H1 (cell line): ENCODE measurements at regions of chr5 and their contacts with region 1.

Region 1: GRCh38 chr5:149035372-149035790 is 27.5 kb downstream of the SH3TC2 start:
- DNase-seq: peak; percentile 41 to 80
- H3K4me3 ChIP-seq: no peak overlapping the region
- H3K27ac ChIP-seq: no peak overlapping the region
- H3K4me1 ChIP-seq: no peaks in the 10 kb centered on the region
- H3K27me3 ChIP-seq: no peaks in the 10 kb centered on the region
- CTCF ChIP-seq: peak; percentile 92 to 94 (median 94)
- EP300 ChIP-seq: no peak
- POLR2A ChIP-seq: no peak
- RAD21 ChIP-seq: peak; percentile 96 to 97

Region 2: DNA sequence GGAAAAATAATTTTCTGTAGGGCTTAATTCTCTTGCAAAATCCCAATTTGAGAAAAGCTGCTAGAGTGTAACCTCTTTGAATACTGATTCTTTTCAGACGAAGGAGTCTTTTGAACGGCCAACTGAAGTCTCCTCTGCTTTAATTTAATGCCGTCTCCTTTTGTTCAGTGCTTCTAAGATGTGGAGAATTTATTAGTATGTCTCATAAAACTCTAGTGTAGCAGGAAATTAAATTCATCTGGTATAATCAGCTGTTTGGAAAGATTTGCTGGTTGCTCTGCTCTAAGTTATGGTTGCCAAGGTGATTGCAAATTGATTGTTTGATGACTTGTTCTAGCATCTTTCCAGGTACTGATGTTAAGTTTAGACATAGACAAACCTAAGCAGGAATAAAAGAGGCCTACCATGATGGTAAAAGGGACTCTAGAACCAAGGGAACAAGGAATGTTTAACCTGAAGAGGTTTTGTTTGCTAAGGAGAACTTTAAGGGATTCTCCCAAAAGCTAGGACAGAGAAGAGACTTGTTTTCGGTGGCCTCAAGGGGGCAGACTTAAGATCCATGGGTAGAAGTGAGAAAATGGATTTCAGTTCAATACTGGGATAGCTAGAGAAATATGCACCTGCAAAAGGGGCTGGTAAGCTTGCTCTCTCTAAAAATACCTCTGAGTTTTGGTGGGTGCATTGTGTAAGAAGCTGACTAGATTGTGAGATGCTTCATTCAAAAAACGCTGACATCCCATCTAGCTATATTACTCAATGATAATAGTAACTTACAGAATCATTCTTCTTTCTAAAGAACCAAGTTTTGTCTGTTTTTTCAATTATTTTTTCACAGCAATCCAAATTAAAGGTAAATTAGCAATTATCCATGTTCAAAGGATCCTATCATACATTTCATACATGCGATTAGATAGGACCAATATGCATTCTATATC is 214.7 kb before region 1 on chr5:
- CTCF ChIA-PET with region 1: interaction called, 16 read pairs
- POLR2A ChIA-PET with region 1: no interaction called
- DNase-seq: no peak
- H3K4me3 ChIP-seq: no peak overlapping the region
- H3K27ac ChIP-seq: no peak overlapping the region
- H3K4me1 ChIP-seq: peaks cover 0 to 1% (median 0%) of the 10 kb centered on the region in 4 experiments; a peak in 4 of 7 replicates
- H3K27me3 ChIP-seq: peaks cover 0 to 5% (median under 1%) of the 10 kb centered on the region in 4 experiments; a peak in 4 of 7 replicates
- CTCF ChIP-seq: peak in 2 of 3 experiments; percentile 46 to 68; a peak in 3 of 4 replicates
- EP300 ChIP-seq: no peak
- POLR2A ChIP-seq: no peak
- RAD21 ChIP-seq: peak; percentile 46 to 59; a peak in 3 of 4 replicates

Region 3: GRCh38 chr5:148963664-148964063 is 71.7 kb before region 1 on chr5:
- CTCF ChIA-PET with region 1: interaction called, 31 read pairs
- POLR2A ChIA-PET with region 1: no interaction called
- DNase-seq: peak in 1 of 2 experiments; percentile 0
- H3K4me3 ChIP-seq: no peak overlapping the region
- H3K27ac ChIP-seq: no peak overlapping the region
- H3K4me1 ChIP-seq: no peaks in the 10 kb centered on the region
- H3K27me3 ChIP-seq: no peaks in the 10 kb centered on the region
- CTCF ChIP-seq: no peak
- EP300 ChIP-seq: no peak
- POLR2A ChIP-seq: no peak
- RAD21 ChIP-seq: no peak

Region 4: GRCh38 chr5:149011074-149011476 is 24.3 kb before region 1 on chr5:
- CTCF ChIA-PET with region 1: interaction called, 27 read pairs
- POLR2A ChIA-PET with region 1: no interaction called
- DNase-seq: no peak
- H3K4me3 ChIP-seq: no peak overlapping the region
- H3K27ac ChIP-seq: no peak overlapping the region
- H3K4me1 ChIP-seq: no peaks in the 10 kb centered on the region
- H3K27me3 ChIP-seq: no peaks in the 10 kb centered on the region
- CTCF ChIP-seq: no peak
- EP300 ChIP-seq: no peak
- POLR2A ChIP-seq: no peak
- RAD21 ChIP-seq: no peak

Region 5: GRCh38 chr5:149053072-149053695 is 17.8 kb after region 1 on chr5:
- CTCF ChIA-PET with region 1: interaction called, 25 read pairs
- POLR2A ChIA-PET with region 1: no interaction called
- DNase-seq: no peak
- H3K4me3 ChIP-seq: no peak overlapping the region
- H3K27ac ChIP-seq: no peak overlapping the region
- H3K4me1 ChIP-seq: no peaks in the 10 kb centered on the region
- H3K27me3 ChIP-seq: no peaks in the 10 kb centered on the region
- CTCF ChIP-seq: no peak
- EP300 ChIP-seq: no peak
- POLR2A ChIP-seq: no peak
- RAD21 ChIP-seq: no peak